Mammary epithelial cell (primary cell): ENCODE measurements at regions of chr17 and their contacts with region 1.

Region 1: DNA sequence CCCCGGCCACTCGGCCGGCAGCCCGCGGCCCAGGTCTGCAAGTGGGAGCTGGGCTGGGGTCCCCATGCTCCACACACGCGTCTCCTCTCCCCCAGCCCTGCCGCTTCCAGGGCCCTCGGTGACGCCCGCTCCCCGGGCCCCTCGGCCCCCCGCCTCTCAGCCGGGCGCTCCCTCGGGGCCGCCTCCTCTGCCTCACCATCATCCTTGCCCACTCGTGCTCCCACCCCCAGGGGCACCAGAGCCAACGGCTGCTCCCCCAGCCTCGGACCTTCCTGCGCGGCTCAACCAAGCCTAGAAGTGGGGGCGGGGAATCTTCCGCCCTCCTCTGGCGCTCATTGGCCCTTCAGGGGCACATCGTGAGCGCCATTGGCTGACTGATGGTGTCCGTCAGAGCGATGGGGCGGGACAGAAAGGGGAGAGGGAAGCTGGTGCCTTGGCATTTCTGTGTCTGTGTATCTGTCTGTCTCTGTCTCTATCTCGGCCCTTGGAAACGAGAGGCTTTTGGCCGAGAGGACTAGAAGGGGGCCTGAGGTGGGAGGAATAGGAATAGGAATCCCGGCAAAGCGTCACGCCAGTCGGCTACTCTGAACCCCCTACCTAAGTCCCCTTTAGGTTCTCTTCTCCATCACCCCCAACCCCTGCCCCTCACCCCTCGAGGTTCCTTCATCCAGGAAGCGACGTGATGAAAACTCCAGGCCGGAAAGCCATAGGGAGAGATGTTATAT is 88.9 kb downstream of the CDC27 start:
- DNase-seq: peak; percentile 92
- H3K4me3 ChIP-seq: peak overlapping the region; percentile 77 to 95 (median 79)
- H3K27ac ChIP-seq: peak overlapping the region; percentile 50
- H3K4me1 ChIP-seq: no peaks in the 10 kb centered on the region
- H3K27me3 ChIP-seq: no peaks in the 10 kb centered on the region
- CTCF ChIP-seq: no peak

Region 2: GRCh38 chr17:47066841-47067682 is 33.1 kb before region 1 on chr17:
- CTCF ChIA-PET with region 1: no interaction called
- dilution Hi-C with region 1: no loop called
- in situ Hi-C with region 1: no loop called
- intact Hi-C with region 1: loop called (anchors 1 kb)
- DNase-seq: peak; percentile 82
- H3K4me3 ChIP-seq: peak overlapping the region; percentile 95 to 100 (median 99)
- H3K27ac ChIP-seq: peak overlapping the region; percentile 92
- H3K4me1 ChIP-seq: peaks cover 24% of the 10 kb centered on the region
- H3K27me3 ChIP-seq: no peaks in the 10 kb centered on the region
- CTCF ChIP-seq: peak in 1 of 2 donors; percentile 17